ENCODE measurements at regions of chr1 and their contacts with region 1.

Region 1: DNA sequence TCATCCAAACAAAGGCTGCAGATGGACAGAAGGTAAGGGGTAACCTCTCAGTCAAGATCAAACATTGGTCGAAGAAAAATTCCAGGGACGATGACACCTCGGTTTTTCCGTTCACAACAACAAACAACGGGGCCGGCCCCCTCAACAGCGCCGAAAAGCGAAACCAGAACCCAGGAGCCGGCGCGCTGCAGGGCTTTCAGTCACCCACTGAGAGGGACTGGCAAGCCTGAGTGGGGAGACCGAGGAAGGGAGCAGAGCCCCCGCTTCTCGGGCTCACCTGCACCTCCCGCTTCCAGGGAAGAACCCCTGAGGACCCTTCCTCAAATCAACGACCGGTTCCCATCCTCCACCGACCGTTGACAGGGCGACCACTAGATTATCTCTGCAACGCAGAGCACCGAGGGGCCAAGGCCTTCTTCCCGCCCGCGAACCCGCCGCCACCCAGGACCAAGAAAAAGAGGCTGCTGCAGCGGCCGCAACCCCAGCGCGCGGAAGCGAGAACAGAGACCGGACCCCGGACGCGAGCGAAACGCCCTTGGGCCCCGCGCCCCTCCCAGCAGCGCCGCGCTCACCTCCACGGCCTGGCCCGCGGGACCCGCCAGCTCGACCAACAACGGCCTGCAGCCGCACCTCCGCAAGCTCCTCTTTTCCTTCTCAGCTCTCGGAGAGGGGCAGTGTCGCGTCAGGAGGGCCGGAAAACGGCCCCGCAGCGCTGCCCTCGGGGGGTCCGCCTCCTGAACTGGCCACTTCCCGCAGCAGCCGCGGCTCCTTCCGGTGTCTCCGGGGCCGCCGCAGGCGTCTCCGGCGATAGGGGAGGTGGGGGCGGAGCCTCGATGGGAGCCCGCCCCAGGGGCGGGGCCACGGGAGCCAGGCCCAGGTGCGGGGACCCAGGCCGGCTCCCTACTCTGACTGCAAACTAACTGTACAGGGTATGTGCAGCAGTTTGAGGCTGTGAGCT is at the start of gene USP33:
- DNase-seq: peak; percentile 84
- H3K4me3 Mint-ChIP-seq: peak within 1 kb of the TSS; percentile 91
- H3K27ac Mint-ChIP-seq: peak within 1 kb of the TSS; percentile 91
- H3K4me1 Mint-ChIP-seq: peaks cover 31% of the 10 kb centered on the region
- H3K27me3 Mint-ChIP-seq: no peaks in the 10 kb centered on the region
- CTCF ChIP-seq: no peak
- total RNA-seq, gene USP33: 39.7 and 45.1 TPM in 2 replicates

Region 2: DNA sequence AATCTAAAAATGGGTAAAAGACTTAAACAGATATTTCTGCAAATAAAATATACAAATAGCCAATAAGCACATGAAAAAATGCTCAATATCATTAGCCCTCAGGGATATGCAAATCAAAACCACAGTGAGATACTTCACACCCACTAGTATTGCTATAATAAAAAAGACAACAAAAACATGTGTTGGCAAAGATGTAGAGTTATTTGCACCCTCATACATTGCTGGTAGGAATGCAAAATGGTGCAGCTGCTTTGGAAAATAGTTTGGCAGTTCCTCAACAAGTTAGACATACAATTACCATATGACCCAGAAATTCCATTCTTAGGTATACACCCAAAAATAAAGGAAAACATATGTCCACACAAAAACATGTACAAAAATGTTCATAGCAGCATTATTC is 107.1 kb before region 1 on chr1:
- CTCF ChIA-PET with region 1: no interaction called
- POLR2A ChIA-PET with region 1: no interaction called
- intact Hi-C with region 1: no loop called
- DNase-seq: no peak
- H3K4me3 Mint-ChIP-seq: no peak overlapping the region
- H3K27ac Mint-ChIP-seq: no peak overlapping the region
- H3K4me1 Mint-ChIP-seq: peaks cover 12% of the 10 kb centered on the region
- H3K27me3 Mint-ChIP-seq: no peaks in the 10 kb centered on the region
- CTCF ChIP-seq: no peak

Region 3: GRCh38 chr1:77744576-77744975 is 14.8 kb before region 1 on chr1:
- CTCF ChIA-PET with region 1: interaction called, 7 read pairs
- POLR2A ChIA-PET with region 1: interaction called, 13 read pairs
- intact Hi-C with region 1: no loop called
- DNase-seq: peak; percentile 48
- H3K4me3 Mint-ChIP-seq: no peak overlapping the region
- H3K27ac Mint-ChIP-seq: peak overlapping the region; percentile 57
- H3K4me1 Mint-ChIP-seq: peaks cover 24% of the 10 kb centered on the region
- H3K27me3 Mint-ChIP-seq: no peaks in the 10 kb centered on the region
- CTCF ChIP-seq: no peak

Region 4: DNA sequence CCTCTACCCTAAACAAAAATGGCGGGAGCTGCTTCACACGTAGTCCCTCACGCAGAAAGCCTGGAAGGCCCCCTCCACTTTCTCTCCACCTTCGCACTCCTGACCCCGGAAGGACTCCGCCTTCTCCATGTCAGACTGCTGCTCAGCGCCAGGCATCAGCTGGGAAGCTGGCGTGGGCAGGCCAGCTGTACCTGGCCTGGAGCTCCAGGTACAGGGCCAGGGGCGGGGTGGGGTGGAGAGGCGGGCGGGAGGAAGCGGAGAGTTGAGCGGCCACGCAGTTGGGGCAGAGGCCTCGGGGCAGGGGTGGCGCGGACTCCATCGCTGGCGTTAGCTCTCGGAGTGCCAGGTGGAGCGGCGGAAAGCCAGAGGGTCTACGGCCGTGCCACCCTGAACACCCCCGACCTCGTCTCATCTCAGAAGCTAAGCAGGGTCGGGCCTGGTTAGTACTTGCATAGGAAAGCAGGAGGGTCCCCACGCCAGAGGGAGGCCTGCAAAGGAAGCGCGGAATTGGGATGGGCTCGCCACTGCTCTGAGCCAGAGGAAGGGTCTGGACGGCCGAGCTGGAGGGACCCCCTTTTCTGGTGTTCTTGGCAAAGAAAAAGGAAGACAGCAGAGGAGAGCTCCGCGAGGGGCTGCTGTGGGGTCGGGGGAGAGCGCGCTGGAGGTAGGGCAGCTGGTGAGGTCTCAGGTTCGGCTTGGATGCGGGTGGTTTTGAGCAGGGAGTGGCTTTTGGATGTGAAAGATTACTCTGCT is 20.4 kb after region 1 on chr1 and contains the start of gene MIGA1:
- CTCF ChIA-PET with region 1: interaction called, 3 read pairs
- POLR2A ChIA-PET with region 1: interaction called, 60 read pairs
- intact Hi-C with region 1: no loop called
- DNase-seq: peak; percentile 92
- H3K4me3 Mint-ChIP-seq: peak within 1 kb of the TSS; percentile 94
- H3K27ac Mint-ChIP-seq: peak within 1 kb of the TSS; percentile 84
- H3K4me1 Mint-ChIP-seq: peaks cover 4% of the 10 kb centered on the region
- H3K27me3 Mint-ChIP-seq: no peaks in the 10 kb centered on the region
- CTCF ChIP-seq: no peak
- total RNA-seq, gene MIGA1: 13.2 and 19.9 TPM in 2 replicates

Region 5: DNA sequence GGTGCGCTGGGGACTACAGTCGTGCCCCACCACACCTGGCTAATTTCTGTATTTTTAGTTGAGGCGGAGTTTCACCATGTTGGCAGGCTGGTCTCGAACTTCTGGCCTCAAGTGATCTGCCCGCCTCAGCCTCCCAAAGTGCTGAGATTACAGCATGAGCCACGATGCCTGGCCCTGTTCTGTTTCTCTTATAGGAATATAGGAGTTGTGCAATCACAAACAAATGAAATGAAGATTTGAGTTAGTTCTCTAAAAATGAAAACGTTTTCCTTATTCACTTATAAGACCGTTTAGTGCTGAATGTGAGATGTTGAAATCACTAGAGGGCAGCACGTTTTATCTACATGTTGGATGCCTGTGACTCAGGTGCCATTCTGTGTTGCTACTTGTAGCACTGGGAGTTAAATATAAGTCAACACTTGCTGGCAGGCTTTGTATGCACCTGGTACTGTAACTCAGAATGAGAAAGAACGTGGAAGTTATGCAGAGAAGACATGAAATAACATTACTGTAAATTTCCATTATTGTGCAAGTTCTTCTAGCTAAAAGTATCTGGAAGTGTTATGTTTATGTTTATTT is 65.9 kb after region 1 on chr1:
- CTCF ChIA-PET with region 1: interaction called, 3 read pairs
- POLR2A ChIA-PET with region 1: interaction called, 19 read pairs
- intact Hi-C with region 1: no loop called
- DNase-seq: peak; percentile 91
- H3K4me3 Mint-ChIP-seq: peak overlapping the region; percentile 29
- H3K27ac Mint-ChIP-seq: peak overlapping the region; percentile 90
- H3K4me1 Mint-ChIP-seq: peaks cover 6% of the 10 kb centered on the region
- H3K27me3 Mint-ChIP-seq: no peaks in the 10 kb centered on the region
- CTCF ChIP-seq: peak; percentile 24

Region 6: DNA sequence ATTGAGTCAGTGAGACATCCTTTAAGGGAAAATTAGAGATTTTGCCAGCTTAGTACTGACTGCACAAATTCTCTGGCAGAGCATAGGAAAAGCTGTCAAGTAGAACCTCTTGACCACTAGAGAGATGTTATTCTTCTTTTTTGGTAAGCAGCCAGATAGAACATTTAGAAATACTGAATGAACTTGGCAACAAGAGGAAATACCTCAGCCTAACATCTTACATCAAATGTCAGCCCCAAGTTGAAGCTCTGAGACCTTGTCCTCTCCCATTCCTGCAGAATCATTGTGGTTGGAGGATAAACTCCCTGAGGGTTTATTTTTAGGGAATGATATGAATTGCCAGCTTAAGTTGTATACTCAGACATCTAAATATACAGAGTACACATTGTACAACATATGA is 73.6 kb after region 1 on chr1:
- CTCF ChIA-PET with region 1: no interaction called
- POLR2A ChIA-PET with region 1: interaction called, 10 read pairs
- intact Hi-C with region 1: no loop called
- DNase-seq: peak; percentile 92
- H3K4me3 Mint-ChIP-seq: peak overlapping the region; percentile 6
- H3K27ac Mint-ChIP-seq: peak overlapping the region; percentile 96
- H3K4me1 Mint-ChIP-seq: peaks cover 46% of the 10 kb centered on the region
- H3K27me3 Mint-ChIP-seq: no peaks in the 10 kb centered on the region
- CTCF ChIP-seq: no peak

Region 7: GRCh38 chr1:77888081-77888780 is 128.9 kb after region 1 on chr1 and contains the start of gene NEXN:
- CTCF ChIA-PET with region 1: no interaction called
- POLR2A ChIA-PET with region 1: interaction called, 4 read pairs
- intact Hi-C with region 1: loop called (anchors 5 kb)
- DNase-seq: peak; percentile 41
- H3K4me3 Mint-ChIP-seq: peak within 1 kb of the TSS; percentile 78
- H3K27ac Mint-ChIP-seq: peak within 1 kb of the TSS; percentile 6
- H3K4me1 Mint-ChIP-seq: peaks cover 6% of the 10 kb centered on the region
- H3K27me3 Mint-ChIP-seq: no peaks in the 10 kb centered on the region
- CTCF ChIP-seq: no peak
- total RNA-seq, gene NEXN: 1.6 and 1.8 TPM in 2 replicates